ENCODE measurements at regions of chr10 and their contacts with region 1.

Region 1: DNA sequence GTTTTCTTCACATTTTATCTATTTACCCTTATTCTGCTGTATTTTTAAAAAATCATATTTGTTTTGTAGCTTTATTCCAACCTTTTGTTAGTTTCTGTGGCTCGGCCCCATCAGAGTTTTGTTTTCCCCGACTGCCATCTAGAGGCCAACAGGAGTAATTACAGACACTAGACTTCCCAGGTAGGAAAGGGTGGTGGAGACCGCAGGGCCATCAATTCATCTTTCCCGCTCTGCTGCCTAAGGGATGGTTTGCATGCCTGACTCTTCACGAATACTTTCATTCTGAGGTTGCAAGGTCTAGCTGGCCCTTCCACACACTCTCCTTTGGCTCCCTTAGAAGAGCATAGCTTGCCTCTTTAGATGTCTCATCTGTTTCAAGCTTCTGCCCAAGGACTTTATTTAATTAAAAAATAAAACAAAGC is 38.3 kb downstream of the LYZL2 start:
- DNase-seq: peak; percentile 19
- H3K4me3 Mint-ChIP-seq: no peak overlapping the region
- H3K27ac Mint-ChIP-seq: no peak overlapping the region
- H3K4me1 Mint-ChIP-seq: peaks cover 2% of the 10 kb centered on the region
- H3K27me3 Mint-ChIP-seq: peaks cover 29% of the 10 kb centered on the region

Region 2: GRCh38 chr10:30392564-30392990 is 198.7 kb before region 1 on chr10:
- intact Hi-C with region 1: loop called (anchors 1 kb)
- DNase-seq: peak; percentile 68
- H3K4me3 Mint-ChIP-seq: no peak overlapping the region
- H3K27ac Mint-ChIP-seq: no peak overlapping the region
- H3K4me1 Mint-ChIP-seq: peaks cover 14% of the 10 kb centered on the region
- H3K27me3 Mint-ChIP-seq: peaks cover 22% of the 10 kb centered on the region

Region 3: GRCh38 chr10:30553625-30554439 is 37.4 kb before region 1 on chr10:
- intact Hi-C with region 1: no loop called
- DNase-seq: no peak
- H3K4me3 Mint-ChIP-seq: no peak overlapping the region
- H3K27ac Mint-ChIP-seq: no peak overlapping the region
- H3K4me1 Mint-ChIP-seq: peaks cover 3% of the 10 kb centered on the region
- H3K27me3 Mint-ChIP-seq: peaks cover 9% of the 10 kb centered on the region

Measured in activated T-helper 2 cell treated with anti-CD3 and anti-CD28 coated beads, Interferon-gamma antibody, Interleukin-2, Interleukin-4, amounts not matched to agents 10 μg/mL and 5 μg/mL and 100 μg/mL, durations not matched to agents 14 hours and 24 hours and 36 hours (primary cell).